ENCODE measurements at regions of chr7 and their contacts with region 1.

Region 1: GRCh38 chr7:4738711-4739527 is 36.5 kb upstream of the AP5Z1 start:
- DNase-seq: peak; percentile 73
- ATAC-seq: peak; percentile 88
- H3K4me3 ChIP-seq: peak overlapping the region; percentile 12 to 37
- H3K27ac ChIP-seq: peak overlapping the region; percentile 64
- H3K4me1 ChIP-seq: peaks cover 32 to 62% of the 10 kb centered on the region in 2 experiments
- H3K27me3 ChIP-seq: no peaks in the 10 kb centered on the region
- CTCF ChIP-seq: no peak
- POLR2A ChIP-seq: no peak
- RAD21 ChIP-seq: no peak

Region 2: GRCh38 chr7:4689668-4690067 is 49.3 kb before region 1 on chr7:
- CTCF ChIA-PET with region 1: no interaction called
- POLR2A ChIA-PET with region 1: no interaction called
- RAD21 ChIA-PET with region 1: no interaction called
- intact Hi-C with region 1: loop called (anchors 2 kb)
- DNase-seq: no peak
- ATAC-seq: no peak
- H3K4me3 ChIP-seq: no peak overlapping the region
- H3K27ac ChIP-seq: no peak overlapping the region
- H3K4me1 ChIP-seq: peaks cover 13 to 24% of the 10 kb centered on the region in 2 experiments
- H3K27me3 ChIP-seq: no peaks in the 10 kb centered on the region
- CTCF ChIP-seq: no peak
- POLR2A ChIP-seq: no peak
- RAD21 ChIP-seq: no peak

Region 3: GRCh38 chr7:4725014-4725849 is 13.7 kb before region 1 on chr7:
- CTCF ChIA-PET with region 1: no interaction called
- POLR2A ChIA-PET with region 1: no interaction called
- RAD21 ChIA-PET with region 1: no interaction called
- intact Hi-C with region 1: no loop called
- DNase-seq: no peak
- ATAC-seq: no peak
- H3K4me3 ChIP-seq: no peak overlapping the region
- H3K27ac ChIP-seq: no peak overlapping the region
- H3K4me1 ChIP-seq: no peaks in the 10 kb centered on the region
- H3K27me3 ChIP-seq: no peaks in the 10 kb centered on the region
- CTCF ChIP-seq: no peak
- POLR2A ChIP-seq: no peak
- RAD21 ChIP-seq: no peak